Activated CD4-positive, alpha-beta T cell treated with anti-CD3 and anti-CD28 coated beads for 36 hours (primary cell): ENCODE measurements at regions of chr2 and their contacts with region 1.

Region 1: GRCh38 chr2:70340921-70341765 is 39.3 kb upstream of the FAM136A start:
- DNase-seq: peak; percentile 49
- ATAC-seq: peak; percentile 66
- H3K4me3 Mint-ChIP-seq: no peak overlapping the region
- H3K27ac Mint-ChIP-seq: no peak overlapping the region
- H3K4me1 Mint-ChIP-seq: peaks cover 2% of the 10 kb centered on the region
- H3K27me3 Mint-ChIP-seq: no peaks in the 10 kb centered on the region

Region 2: DNA sequence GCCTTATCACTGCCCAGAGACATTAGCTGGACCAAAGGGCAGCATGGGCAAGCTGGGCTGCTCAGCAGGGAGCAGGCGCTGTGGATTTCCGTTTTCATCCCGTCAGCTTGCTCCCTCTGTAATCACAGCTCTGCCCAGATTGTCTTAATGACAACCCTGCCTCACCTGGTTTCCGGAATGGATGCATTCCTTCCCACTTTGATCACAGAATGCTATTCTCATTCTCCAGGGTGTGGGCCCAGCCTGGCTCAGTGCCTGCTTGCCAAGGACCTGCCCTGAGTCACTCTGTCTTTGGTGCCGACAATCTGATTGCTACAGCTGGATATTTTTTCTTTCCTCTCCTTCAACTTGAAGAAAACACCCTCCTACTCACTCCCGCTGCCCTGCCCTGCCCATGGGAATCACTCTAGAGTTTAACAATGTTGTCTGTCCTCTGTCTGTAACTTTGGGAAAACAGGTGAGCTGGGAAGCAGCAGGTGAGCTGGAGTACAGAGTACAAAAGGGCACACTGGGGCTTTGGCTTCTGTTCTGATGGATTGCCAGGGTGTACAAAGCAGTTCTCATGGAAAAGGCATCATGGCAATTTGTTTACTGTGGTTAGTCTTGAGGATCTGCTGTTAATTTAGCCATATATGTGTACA is 12.1 kb before region 1 on chr2:
- CTCF ChIA-PET with region 1: interaction called, 16 read pairs
- POLR2A ChIA-PET with region 1: interaction called, 3 read pairs
- intact Hi-C with region 1: no loop called
- DNase-seq: no peak
- ATAC-seq: no peak
- H3K4me3 Mint-ChIP-seq: no peak overlapping the region
- H3K27ac Mint-ChIP-seq: no peak overlapping the region
- H3K4me1 Mint-ChIP-seq: no peaks in the 10 kb centered on the region
- H3K27me3 Mint-ChIP-seq: no peaks in the 10 kb centered on the region

Region 3: GRCh38 chr2:70616168-70616694 is 275.1 kb after region 1 on chr2:
- CTCF ChIA-PET with region 1: interaction called, 60 read pairs
- POLR2A ChIA-PET with region 1: no interaction called
- intact Hi-C with region 1: loop called (anchors 1 kb)
- DNase-seq: no peak
- ATAC-seq: no peak
- H3K4me3 Mint-ChIP-seq: no peak overlapping the region
- H3K27ac Mint-ChIP-seq: no peak overlapping the region
- H3K4me1 Mint-ChIP-seq: no peaks in the 10 kb centered on the region
- H3K27me3 Mint-ChIP-seq: peaks cover 2% of the 10 kb centered on the region

Region 4: DNA sequence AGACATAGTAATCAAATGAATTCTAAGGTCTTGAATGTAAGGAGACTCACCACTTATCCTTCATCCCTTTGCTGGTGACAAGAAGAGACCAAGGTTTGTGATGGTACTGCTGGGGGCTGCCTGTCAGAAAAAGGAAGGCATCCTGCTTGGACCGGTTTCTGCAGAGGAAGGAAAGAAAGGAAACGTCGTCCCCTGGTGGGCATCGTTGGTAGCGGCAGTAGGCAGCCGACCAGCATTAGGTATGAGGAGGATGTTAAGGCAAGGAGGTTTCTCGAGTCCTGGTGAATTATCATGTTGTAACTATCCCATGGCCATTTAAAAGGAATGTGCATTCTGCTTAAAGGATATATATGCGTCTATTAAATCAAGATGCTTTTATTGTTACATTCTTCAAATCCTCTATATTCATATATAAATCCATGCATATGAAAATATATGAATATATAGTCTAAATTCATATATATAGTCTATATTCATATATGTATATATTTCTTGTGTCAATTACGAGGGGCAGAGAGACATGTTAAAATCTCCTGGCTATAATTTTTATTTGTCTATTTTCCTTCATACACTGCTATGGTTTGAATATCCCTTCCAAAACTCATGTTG is 306.8 kb after region 1 on chr2:
- CTCF ChIA-PET with region 1: interaction called, 37 read pairs
- POLR2A ChIA-PET with region 1: no interaction called
- intact Hi-C with region 1: loop called (anchors 1 to 2 kb)
- DNase-seq: peak; percentile 87
- ATAC-seq: peak; percentile 88
- H3K4me3 Mint-ChIP-seq: no peak overlapping the region
- H3K27ac Mint-ChIP-seq: no peak overlapping the region
- H3K4me1 Mint-ChIP-seq: peaks cover 4% of the 10 kb centered on the region
- H3K27me3 Mint-ChIP-seq: no peaks in the 10 kb centered on the region